Activated T-helper 1 cell treated with anti-CD3 and anti-CD28 coated beads, Interleukin-12 subunit alpha, Interleukin-12 subunit beta, Interleukin-2, Interleukin-4 antibody, amounts not matched to agents 30 ng/mL and 10 ng/mL and 1 ng/mL, durations not matched to agents 14 hours and 24 hours and 36 hours (primary cell): ENCODE measurements at regions of chr3 and their contacts with region 1.

Region 1: DNA sequence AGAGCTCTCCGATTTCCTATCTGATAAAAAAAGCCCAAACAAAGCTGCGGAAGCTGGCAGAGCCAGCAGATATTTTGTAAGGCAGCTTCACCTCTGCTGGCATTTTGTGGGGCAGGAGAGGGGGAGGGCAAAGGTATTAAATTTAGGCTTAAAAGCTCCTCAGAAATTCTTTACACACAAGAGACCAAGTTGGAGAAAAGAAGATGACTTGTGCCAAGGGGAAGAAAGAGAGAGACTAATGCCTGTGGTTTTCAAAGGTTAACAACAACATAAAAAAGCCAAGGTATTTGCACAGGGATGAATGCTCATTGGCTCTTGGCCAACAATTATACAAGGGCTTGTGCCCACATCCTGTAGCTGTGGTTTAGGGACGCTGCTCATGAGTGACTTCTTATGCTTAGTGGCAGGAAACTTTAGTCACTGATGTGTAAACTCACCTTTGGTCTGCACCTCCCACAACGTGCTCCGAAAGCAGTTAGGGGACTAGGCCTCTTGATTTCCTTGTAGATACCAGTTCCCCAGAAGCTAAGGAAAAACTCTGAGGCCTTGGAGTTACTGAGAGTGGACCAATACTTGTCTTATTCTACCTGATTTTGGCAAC is 152.9 kb downstream of the TPRG1 start:
- DNase-seq: peak; percentile 85
- H3K4me3 Mint-ChIP-seq: peak overlapping the region; percentile 83
- H3K27ac Mint-ChIP-seq: peak overlapping the region; percentile 99
- H3K4me1 Mint-ChIP-seq: peaks cover 72% of the 10 kb centered on the region
- H3K27me3 Mint-ChIP-seq: peaks cover 3% of the 10 kb centered on the region

Region 2: DNA sequence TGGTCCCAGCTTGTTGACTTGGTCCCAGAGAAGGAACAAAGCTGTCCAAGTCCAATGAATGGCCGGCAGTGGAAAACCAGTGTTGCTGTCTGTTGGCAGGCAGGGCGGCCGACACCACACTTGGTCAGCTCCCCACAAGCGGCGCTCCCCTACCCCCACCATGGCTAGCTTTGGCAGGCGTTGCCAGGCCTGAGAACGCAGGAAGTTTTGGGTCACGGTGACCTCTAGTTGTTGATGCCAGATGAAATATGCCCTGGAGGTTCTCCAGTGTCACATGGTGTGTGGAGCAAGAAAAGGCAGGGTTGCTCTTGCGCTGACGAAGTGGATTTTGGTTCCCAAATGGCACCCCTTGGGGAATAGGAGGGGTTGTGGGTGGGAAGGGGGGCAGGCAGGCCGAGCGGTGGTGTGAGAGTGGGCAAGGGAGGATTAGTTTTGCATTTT is 225.6 kb before region 1 on chr3:
- intact Hi-C with region 1: no loop called
- DNase-seq: no peak
- H3K4me3 Mint-ChIP-seq: no peak overlapping the region
- H3K27ac Mint-ChIP-seq: no peak overlapping the region
- H3K4me1 Mint-ChIP-seq: no peaks in the 10 kb centered on the region
- H3K27me3 Mint-ChIP-seq: peaks cover 9% of the 10 kb centered on the region

Region 3: DNA sequence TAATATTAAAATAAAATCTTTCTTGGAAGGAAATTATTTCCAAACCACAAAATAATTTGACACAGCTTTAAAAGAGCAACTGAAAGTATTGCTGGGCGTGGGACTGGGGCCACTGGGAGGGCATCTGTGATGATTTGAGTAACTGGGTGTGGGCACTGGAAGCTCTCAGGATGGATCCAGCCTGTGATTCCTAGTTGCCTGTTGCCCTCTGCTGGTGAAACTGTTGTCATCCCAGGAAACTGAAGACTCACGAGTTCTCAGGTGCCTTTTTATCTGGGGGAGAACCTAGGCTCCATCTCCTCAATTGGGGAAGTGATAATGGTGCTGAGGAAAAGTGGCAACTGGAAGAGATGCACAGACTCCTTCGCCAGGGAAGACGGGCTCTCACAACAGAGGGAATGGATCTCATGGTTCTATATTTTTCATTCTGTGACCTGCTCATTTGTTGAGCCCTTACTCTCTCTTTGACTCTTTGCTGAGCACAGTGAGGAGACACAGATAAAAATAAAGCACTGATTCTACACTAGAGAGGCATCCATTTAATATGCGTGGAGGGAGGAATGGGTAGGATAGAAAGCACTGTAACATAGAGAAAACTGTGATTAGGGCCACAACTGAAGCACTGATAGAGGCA is 91.3 kb before region 1 on chr3:
- intact Hi-C with region 1: loop called (anchors 1 kb)
- DNase-seq: no peak
- H3K4me3 Mint-ChIP-seq: no peak overlapping the region
- H3K27ac Mint-ChIP-seq: no peak overlapping the region
- H3K4me1 Mint-ChIP-seq: peaks cover 24% of the 10 kb centered on the region
- H3K27me3 Mint-ChIP-seq: peaks cover 12% of the 10 kb centered on the region

Region 4: DNA sequence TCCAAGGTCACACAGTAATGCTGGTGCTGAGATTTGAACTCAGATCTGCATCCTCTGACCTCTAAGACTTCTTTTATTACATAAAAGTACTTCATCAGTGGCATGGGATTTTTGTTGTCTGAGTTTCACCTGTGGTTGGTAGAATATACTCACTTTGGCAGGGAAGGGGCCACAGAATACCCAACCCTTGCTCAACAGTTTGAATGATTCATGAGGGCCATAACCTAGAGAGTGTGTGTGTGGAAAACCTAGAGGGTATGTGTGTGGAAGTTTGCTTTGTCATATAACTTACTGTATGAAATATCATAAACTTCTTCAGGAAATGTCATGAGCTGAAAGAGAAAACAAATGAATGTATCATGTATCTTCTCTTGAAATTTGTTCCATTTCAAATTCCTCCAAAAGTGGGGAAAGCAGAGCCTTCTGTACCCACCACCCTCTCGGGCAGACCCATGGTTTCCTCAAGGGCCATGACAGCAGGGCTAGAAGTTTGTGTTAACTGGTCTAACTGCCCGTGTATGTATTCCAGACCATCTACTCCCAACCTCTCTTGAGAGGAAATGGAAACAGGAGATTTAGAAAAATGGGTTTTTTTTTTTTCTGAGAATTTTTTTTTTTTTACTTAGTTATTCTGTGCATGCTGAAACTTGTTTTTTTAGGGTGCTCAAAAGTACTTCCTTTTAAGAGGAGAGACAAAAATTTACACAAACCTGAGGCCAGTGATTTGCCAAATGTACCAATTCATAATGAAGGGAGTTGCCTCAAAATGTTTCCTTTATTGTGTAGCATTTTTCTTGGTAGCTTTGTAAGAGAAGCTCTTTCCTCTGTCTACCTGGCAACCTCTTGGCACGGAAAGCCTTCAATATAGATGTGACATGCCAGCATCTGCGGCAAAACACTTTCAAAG is 25.9 kb before region 1 on chr3:
- intact Hi-C with region 1: loop called (anchors 1 kb)
- DNase-seq: no peak
- H3K4me3 Mint-ChIP-seq: peak overlapping the region; percentile 28
- H3K27ac Mint-ChIP-seq: peak overlapping the region; percentile 70
- H3K4me1 Mint-ChIP-seq: peaks cover 44% of the 10 kb centered on the region
- H3K27me3 Mint-ChIP-seq: no peaks in the 10 kb centered on the region

Region 5: DNA sequence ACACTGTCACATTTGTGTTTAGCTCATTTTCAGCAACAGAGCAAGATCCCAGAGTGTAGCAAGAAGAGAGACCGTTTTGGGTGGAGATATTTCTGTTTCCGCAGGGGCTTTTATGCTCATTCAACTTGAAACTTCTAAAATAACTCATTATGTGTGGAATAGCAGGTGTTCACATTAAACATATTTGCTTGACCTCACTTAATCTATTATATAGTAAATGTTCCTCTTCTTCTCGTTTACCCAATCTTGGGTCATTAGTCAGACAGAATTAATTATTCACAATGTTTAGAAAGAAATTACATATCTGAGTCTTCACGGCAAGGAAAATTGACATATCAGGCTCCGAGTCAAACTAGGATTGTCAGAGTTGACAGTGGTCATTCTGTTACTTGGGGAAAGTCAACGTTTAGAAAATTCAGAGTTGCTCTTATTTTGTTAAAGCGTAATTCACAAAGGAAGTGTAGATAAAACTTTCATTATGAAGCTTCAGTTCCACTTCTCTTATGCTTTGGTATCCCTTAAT is 70.0 kb after region 1 on chr3:
- intact Hi-C with region 1: loop called (anchors 1 kb)
- DNase-seq: no peak
- H3K4me3 Mint-ChIP-seq: peak overlapping the region; percentile 20
- H3K27ac Mint-ChIP-seq: peak overlapping the region; percentile 76
- H3K4me1 Mint-ChIP-seq: peaks cover 34% of the 10 kb centered on the region
- H3K27me3 Mint-ChIP-seq: no peaks in the 10 kb centered on the region

Region 6: GRCh38 chr3:190513409-190514162 is 1188.9 kb after region 1 on chr3 and contains the start of gene IL1RAP:
- intact Hi-C with region 1: loop called (anchors 10 kb)
- DNase-seq: peak; percentile 88
- H3K4me3 Mint-ChIP-seq: peak within 1 kb of the TSS; percentile 89
- H3K27ac Mint-ChIP-seq: peak within 1 kb of the TSS; percentile 98
- H3K4me1 Mint-ChIP-seq: peaks cover 49% of the 10 kb centered on the region
- H3K27me3 Mint-ChIP-seq: peaks cover 3% of the 10 kb centered on the region
- total RNA-seq, gene IL1RAP: 26.4 and 31.6 TPM in 2 replicates